CD8-positive, alpha-beta T cell (primary cell): ENCODE measurements at regions of chr17 and their contacts with region 1.

Region 1: DNA sequence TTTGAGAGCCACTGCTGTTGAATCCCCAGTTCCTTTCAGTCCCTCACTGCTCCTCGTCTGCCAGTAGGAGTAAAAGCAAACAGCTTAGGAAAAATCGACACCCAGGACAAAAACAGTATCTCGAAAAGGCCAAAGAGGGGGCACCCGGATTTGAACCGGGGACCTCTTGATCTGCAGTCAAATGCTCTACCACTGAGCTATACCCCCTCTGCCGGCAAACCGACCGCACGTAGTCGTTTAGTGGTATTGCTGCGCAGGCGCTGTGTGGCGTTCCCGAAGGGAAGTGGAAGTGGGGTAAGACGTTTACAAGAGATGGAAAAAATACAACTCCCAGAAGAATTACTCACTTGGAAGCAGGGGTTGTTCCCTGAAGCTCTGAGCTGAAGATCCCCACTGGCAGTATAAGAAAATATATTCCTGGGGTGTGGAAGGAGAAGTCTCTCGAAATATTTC is 2.2 kb upstream of the PLXDC1 start:
- DNase-seq: peak; percentile 82 to 99 (median 94)
- ATAC-seq: peak; percentile 54
- H3K4me3 ChIP-seq: peak overlapping the region; percentile 98 to 100
- H3K4me3 Mint-ChIP-seq: peak overlapping the region; percentile 100
- H3K27ac ChIP-seq: peak overlapping the region; percentile 60 to 68
- H3K27ac Mint-ChIP-seq: peak overlapping the region; percentile 98
- H3K4me1 ChIP-seq: peaks cover 42% of the 10 kb centered on the region
- H3K4me1 Mint-ChIP-seq: peaks cover 46% of the 10 kb centered on the region
- H3K27me3 ChIP-seq: no peaks in the 10 kb centered on the region
- H3K27me3 Mint-ChIP-seq: peaks cover 4% of the 10 kb centered on the region
- CTCF ChIP-seq: no peak

Region 2: DNA sequence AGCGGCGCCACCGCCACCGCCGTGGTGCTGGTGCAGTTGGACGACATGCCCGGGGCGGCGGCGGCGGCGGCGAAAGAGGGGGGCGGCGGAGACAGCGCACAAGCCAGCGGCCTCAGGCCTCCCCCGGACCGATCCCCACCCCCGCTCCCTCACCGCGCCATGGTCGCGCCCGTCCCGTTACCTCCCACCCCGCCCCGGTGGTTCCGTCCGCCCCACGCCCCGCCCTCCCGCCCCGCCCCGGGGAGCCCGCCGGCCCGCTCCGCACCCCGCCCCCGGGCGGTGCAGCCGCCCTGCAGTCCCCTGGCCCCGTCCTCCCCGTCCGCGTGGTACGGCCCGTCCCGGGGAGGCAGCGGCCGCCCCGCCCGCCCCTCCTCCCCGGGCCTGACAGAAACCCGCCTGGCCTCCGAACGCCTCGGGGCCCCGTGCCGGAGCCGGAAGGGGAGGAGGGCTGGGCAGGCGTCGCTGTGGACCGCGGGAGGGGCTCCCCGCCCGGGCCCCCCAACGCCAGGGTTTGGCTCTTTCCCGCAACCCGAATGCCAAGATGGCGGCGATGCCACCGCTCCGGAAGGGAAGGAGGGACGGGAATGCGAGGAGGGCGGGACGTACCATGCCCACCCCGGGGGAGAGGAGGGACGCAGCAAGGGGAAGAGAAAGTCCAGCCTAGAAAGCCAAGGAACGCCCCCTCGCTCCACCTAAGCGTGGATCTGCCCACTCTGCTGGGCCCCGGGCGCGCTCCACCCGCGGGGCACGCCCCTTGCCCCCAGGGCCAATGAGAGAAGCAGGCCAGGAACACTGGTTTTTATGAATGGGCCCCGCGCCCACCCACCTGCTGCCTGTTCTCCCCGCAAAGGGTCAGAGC is 354.0 kb before region 1 on chr17 and contains the start of gene PIP4K2B:
- CTCF ChIA-PET with region 1: no interaction called
- POLR2A ChIA-PET with region 1: no interaction called
- intact Hi-C with region 1: loop called (anchors 2 kb)
- DNase-seq: peak; percentile 58 to 93 (median 82)
- ATAC-seq: peak; percentile 76
- H3K4me3 ChIP-seq: peak within 1 kb of the TSS; percentile 88 to 95
- H3K4me3 Mint-ChIP-seq: peak within 1 kb of the TSS; percentile 91
- H3K27ac ChIP-seq: peak within 1 kb of the TSS; percentile 54 to 86
- H3K27ac Mint-ChIP-seq: peak within 1 kb of the TSS; percentile 90
- H3K4me1 ChIP-seq: peaks cover 31% of the 10 kb centered on the region
- H3K4me1 Mint-ChIP-seq: peaks cover 40% of the 10 kb centered on the region
- H3K27me3 ChIP-seq: no peaks in the 10 kb centered on the region
- H3K27me3 Mint-ChIP-seq: no peaks in the 10 kb centered on the region
- CTCF ChIP-seq: no peak
- total RNA-seq, gene PIP4K2B: 9.9 to 13.0 TPM

Region 3: DNA sequence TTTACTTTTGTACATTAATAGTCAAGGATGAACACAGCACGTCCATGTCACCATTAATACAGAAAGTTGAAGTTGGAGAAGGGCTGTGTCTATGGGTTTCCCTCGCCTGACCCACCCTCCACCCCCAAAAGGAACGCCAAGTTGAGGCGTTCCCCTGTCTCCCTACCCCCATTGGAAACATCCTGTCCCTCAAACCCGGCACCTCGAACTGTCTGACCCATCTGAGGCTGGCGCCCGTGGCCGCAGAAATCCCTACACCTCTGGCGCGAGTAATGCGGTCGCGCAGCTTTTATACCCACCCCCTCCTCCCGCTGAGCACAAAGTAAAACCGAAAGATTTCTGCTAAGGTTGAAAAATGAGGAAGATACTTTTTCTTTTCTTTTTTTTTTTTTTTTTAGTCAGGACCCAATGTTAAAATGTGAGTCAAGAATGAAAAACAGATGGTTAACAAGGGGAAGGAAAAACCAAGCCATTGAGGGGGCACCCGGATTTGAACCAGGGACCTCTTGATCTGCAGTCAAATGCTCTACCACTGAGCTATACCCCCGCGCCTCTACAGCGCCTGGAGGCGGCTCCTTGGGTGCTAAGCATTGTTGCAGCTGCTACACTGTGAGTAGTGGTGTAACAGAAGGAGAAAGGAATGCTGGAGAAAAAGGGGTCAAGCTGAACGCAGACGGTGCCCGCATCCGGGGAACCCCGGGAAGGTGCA is 284.7 kb before region 1 on chr17:
- CTCF ChIA-PET with region 1: interaction called, 8 read pairs
- POLR2A ChIA-PET with region 1: interaction called, 18 read pairs
- intact Hi-C with region 1: loop called (anchors 1 kb)
- DNase-seq: peak; percentile 77 to 92 (median 88)
- ATAC-seq: peak; percentile 51
- H3K4me3 ChIP-seq: peak overlapping the region; percentile 99 to 100
- H3K4me3 Mint-ChIP-seq: peak overlapping the region; percentile 99
- H3K27ac ChIP-seq: peak overlapping the region; percentile 79 to 84
- H3K27ac Mint-ChIP-seq: peak overlapping the region; percentile 97
- H3K4me1 ChIP-seq: peaks cover 40% of the 10 kb centered on the region
- H3K4me1 Mint-ChIP-seq: peaks cover 52% of the 10 kb centered on the region
- H3K27me3 ChIP-seq: no peaks in the 10 kb centered on the region
- H3K27me3 Mint-ChIP-seq: no peaks in the 10 kb centered on the region
- CTCF ChIP-seq: no peak

Region 4: GRCh38 chr17:39057701-39058206 is 95.9 kb before region 1 on chr17:
- CTCF ChIA-PET with region 1: interaction called, 31 read pairs
- POLR2A ChIA-PET with region 1: interaction called, 5 read pairs
- intact Hi-C with region 1: no loop called
- DNase-seq: no peak
- ATAC-seq: no peak
- H3K4me3 ChIP-seq: no peak overlapping the region
- H3K4me3 Mint-ChIP-seq: peak overlapping the region; percentile 55
- H3K27ac ChIP-seq: no peak overlapping the region
- H3K27ac Mint-ChIP-seq: no peak overlapping the region
- H3K4me1 ChIP-seq: peaks cover 11% of the 10 kb centered on the region
- H3K4me1 Mint-ChIP-seq: peaks cover 16% of the 10 kb centered on the region
- H3K27me3 ChIP-seq: no peaks in the 10 kb centered on the region
- H3K27me3 Mint-ChIP-seq: peaks cover under 1% of the 10 kb centered on the region
- CTCF ChIP-seq: no peak

Region 5: DNA sequence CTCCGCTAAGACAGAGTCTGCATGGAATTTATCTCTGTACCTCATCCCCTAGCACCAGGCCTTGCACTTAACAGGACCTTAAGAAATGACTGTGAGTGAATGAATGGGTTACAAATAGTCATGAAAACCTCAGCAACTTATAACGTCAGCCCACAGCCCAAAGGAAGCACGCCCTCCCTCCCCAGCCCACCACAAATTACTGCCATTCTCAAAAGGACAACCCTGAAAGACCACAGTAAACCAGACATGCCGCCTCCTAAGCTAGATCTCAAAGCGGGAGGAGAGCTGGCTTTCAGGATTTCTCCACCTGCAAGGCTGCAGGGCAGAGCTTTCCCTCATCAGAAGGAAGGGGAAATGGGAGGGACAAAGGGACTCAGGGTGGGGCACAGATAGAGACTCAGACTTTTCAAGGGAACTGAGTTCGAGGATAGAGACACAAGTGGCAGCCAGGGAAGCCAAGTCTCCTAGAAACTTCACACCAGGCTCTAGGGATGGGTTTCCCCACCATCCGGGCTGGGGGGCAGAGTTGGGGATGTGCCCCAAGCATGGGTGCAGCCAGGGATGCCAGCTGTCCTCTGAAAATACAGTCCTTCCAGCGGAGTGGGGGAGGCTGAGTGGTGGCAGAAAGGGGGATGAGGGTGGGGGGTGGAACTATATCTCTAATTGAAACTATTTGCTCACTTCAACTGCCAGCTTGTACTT is 58.9 kb before region 1 on chr17:
- CTCF ChIA-PET with region 1: interaction called, 94 read pairs
- POLR2A ChIA-PET with region 1: interaction called, 72 read pairs
- intact Hi-C with region 1: loop called (anchors 1 kb)
- DNase-seq: peak; percentile 25 to 80 (median 57)
- ATAC-seq: peak; percentile 59
- H3K4me3 ChIP-seq: peak overlapping the region; percentile 15 to 27
- H3K4me3 Mint-ChIP-seq: peak overlapping the region; percentile 71
- H3K27ac ChIP-seq: peak overlapping the region; percentile 44 to 70
- H3K27ac Mint-ChIP-seq: peak overlapping the region; percentile 92
- H3K4me1 ChIP-seq: peaks cover 87% of the 10 kb centered on the region
- H3K4me1 Mint-ChIP-seq: peaks cover 85% of the 10 kb centered on the region
- H3K27me3 ChIP-seq: no peaks in the 10 kb centered on the region
- H3K27me3 Mint-ChIP-seq: no peaks in the 10 kb centered on the region
- CTCF ChIP-seq: no peak

Region 6: DNA sequence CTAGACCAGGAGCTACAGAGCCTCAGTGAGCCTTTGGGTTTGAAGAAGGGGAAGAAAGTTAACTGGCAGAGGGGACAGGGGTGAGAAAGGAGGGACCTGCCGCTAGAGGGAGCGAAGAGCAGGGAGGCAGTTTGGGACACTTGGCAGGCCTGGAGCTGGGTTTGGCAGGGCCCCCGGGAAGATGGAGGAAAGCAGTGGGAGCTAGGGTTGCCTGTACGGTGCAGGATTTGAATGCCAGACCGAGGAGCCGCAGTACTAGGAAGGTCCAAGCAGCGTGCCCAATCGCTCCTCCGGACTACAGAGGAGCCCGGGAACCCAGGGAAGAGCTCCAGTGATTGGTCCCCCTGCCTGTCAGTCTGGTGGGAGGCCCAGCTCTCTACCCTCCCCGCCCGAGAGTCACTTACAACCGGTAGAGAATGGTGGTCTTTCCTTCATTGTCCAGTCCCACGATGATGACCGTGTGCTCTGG is 11.1 kb after region 1 on chr17:
- CTCF ChIA-PET with region 1: interaction called, 130 read pairs
- POLR2A ChIA-PET with region 1: interaction called, 32 read pairs
- intact Hi-C with region 1: loop called (anchors 1 kb)
- DNase-seq: peak; percentile 53 to 90 (median 74)
- ATAC-seq: peak; percentile 89
- H3K4me3 ChIP-seq: peak overlapping the region; percentile 68 to 95
- H3K4me3 Mint-ChIP-seq: peak overlapping the region; percentile 91
- H3K27ac ChIP-seq: peak overlapping the region in 1 of 2 experiments; percentile 21
- H3K27ac Mint-ChIP-seq: peak overlapping the region; percentile 67
- H3K4me1 ChIP-seq: peaks cover 20% of the 10 kb centered on the region
- H3K4me1 Mint-ChIP-seq: peaks cover 33% of the 10 kb centered on the region
- H3K27me3 ChIP-seq: peaks cover 0 to 3% of the 10 kb centered on the region in 2 experiments
- H3K27me3 Mint-ChIP-seq: peaks cover 11% of the 10 kb centered on the region
- CTCF ChIP-seq: peak; percentile 80

Region 7: DNA sequence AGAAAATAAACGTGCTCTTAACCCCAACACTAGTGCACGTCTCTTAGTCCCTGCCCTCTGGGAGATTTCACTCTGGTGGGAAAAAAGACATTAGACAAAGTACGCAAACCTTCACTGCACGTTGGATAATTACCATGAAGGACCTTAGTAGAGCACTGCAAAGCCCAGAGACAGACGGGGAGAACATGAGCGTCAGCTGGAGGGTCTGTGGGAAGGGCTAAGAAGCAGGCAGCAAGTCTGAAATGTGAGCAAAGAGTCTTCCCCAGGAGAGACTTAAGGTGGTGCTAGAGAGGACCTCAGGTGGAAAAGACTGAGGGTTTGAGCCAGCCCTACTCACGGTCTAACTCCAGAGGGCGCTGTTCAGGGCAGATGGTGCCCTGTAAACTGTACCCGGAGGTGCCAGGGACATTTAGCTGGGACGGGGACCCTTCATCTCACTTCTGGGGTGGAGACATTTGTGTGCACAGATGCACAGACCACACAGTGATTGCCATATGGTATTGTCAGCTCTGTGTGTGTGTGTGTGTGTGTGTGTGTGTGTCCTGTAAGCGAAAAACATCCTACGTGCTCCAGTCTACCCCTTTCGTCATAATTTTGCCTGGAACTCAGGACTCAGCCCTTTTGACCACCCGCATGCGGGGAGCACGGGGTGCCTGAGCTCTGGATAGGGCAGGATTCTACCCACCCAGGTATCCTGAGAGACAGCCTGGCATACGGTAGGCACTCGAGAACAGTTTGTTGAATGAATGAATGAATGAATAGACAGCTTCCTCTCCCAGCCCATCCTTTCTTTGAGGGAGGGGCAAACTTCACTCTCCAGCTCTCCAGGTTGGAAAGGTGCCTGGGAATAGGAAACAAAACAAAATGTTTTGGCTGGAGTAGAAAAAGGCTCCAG is 82.2 kb after region 1 on chr17:
- CTCF ChIA-PET with region 1: interaction called, 9 read pairs
- POLR2A ChIA-PET with region 1: interaction called, 7 read pairs
- intact Hi-C with region 1: loop called (anchors 2 to 5 kb)
- DNase-seq: peak in 6 of 9 experiments; percentile 32 to 80 (median 60)
- ATAC-seq: peak; percentile 42
- H3K4me3 ChIP-seq: no peak overlapping the region
- H3K4me3 Mint-ChIP-seq: no peak overlapping the region
- H3K27ac ChIP-seq: peak overlapping the region in 1 of 2 experiments; percentile 48
- H3K27ac Mint-ChIP-seq: peak overlapping the region; percentile 79
- H3K4me1 ChIP-seq: peaks cover 55% of the 10 kb centered on the region
- H3K4me1 Mint-ChIP-seq: peaks cover 38% of the 10 kb centered on the region
- H3K27me3 ChIP-seq: no peaks in the 10 kb centered on the region
- H3K27me3 Mint-ChIP-seq: peaks cover 8% of the 10 kb centered on the region
- CTCF ChIP-seq: peak; percentile 59